Adrenal gland (tissue), 19 donors: ENCODE measurements at regions of chr15 and their contacts with region 1.

Region 1: DNA sequence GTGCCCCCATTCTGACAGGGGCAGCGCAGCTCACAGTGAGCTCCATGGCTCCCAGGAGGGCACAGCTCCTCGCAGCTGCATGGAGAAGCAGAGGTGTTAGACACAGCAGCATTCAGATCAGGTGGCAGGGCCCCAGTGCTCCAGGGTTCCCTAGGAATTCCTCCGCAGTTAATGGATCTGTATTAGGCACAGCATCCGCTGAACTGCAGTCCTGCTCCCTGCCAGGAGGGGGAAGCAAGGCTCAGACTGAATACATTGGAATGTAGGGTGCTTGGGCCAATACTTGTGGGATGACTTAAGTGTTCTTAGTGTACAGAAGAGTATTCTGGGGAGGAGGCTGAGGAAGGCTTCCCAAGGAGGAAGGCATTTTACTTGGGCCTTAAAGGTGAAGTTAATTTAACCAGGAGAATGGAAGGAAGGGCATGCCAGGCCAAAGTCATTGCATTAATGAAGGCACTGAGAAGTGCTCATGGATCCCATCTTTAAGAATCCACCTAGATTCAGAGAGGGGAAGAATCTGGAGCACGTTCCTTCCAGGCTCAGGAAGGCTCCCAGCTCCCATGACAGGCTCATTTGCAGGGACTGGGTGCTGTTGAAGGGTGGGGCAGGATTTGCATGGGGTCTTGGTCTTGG is 111.6 kb downstream of the RAB11A start:
- DNase-seq: peak; percentile 55 to 87 (median 70)
- H3K4me3 ChIP-seq: no peak overlapping the region
- H3K27ac ChIP-seq: no peak overlapping the region
- H3K4me1 ChIP-seq: no peaks in the 10 kb centered on the region
- H3K27me3 ChIP-seq: peaks cover 8% of the 10 kb centered on the region
- CTCF ChIP-seq: peak; percentile 65 to 84 (median 77)
- POLR2A ChIP-seq: no peak

Region 2: GRCh38 chr15:66196602-66197001 is 215.7 kb after region 1 on chr15:
- intact Hi-C with region 1: loop called (anchors 5 to 10 kb)
- DNase-seq: no peak
- H3K4me3 ChIP-seq: no peak overlapping the region
- H3K27ac ChIP-seq: no peak overlapping the region
- H3K4me1 ChIP-seq: no peaks in the 10 kb centered on the region
- H3K27me3 ChIP-seq: no peaks in the 10 kb centered on the region
- CTCF ChIP-seq: no peak
- POLR2A ChIP-seq: no peak